Heart right ventricle (tissue), 16 donors: ENCODE measurements at regions of chr16 and their contacts with region 1.

Region 1: DNA sequence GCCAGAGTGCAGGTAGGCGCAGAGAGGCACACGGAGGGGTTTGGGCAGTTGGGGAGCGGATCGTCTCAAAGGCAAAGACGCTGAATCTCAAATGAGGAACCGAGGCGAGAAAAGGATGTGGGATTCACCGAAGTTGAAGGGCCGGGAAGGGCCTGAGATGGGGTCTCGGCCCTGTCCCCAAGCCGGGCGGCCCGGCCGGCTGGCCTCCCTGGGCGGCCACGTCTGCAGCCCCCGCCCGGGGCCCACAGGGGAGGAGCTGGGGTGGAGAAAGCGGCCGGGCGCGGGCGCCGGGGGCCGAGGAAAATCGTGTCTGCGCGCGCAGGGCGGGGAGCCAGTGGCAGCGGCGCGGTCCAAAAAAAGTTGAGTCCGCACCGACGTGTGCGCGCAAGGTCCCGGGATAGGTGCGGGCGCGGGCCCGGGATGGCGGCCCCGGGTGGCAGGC is 458 bp downstream of the SLC12A4 start:
- DNase-seq: peak; percentile 59 to 68
- ATAC-seq: peak in 6 of 8 donors; percentile 10 to 44 (median 30)
- H3K4me3 ChIP-seq: peak overlapping the region; percentile 63 to 100 (median 94)
- H3K27ac ChIP-seq: peak overlapping the region; percentile 94 to 100 (median 100)
- H3K4me1 ChIP-seq: peaks cover 38 to 58% (median 44%) of the 10 kb centered on the region in 9 donors
- H3K27me3 ChIP-seq: no peaks in the 10 kb centered on the region
- CTCF ChIP-seq: no peak

Region 2: GRCh38 chr16:67935402-67936123 is 32.4 kb before region 1 on chr16:
- intact Hi-C with region 1: loop called in 1 of 10 experiments (anchors 2 kb)
- DNase-seq: peak; percentile 92 to 94
- ATAC-seq: peak; percentile 90 to 95 (median 92)
- H3K4me3 ChIP-seq: peak overlapping the region; percentile 70 to 96 (median 86)
- H3K27ac ChIP-seq: peak overlapping the region; percentile 70 to 98 (median 95)
- H3K4me1 ChIP-seq: peaks cover 4 to 40% (median 33%) of the 10 kb centered on the region in 9 donors
- H3K27me3 ChIP-seq: no peaks in the 10 kb centered on the region
- CTCF ChIP-seq: peak in 1 of 9 donors; percentile 5

Region 3: GRCh38 chr16:67951485-67951884 is 16.5 kb before region 1 on chr16:
- intact Hi-C with region 1: no loop called
- DNase-seq: peak; percentile 77 to 83
- ATAC-seq: peak; percentile 60 to 89 (median 70)
- H3K4me3 ChIP-seq: no peak overlapping the region
- H3K27ac ChIP-seq: peak overlapping the region in 8 of 10 donors; percentile 48 to 81 (median 60)
- H3K4me1 ChIP-seq: peaks cover 11 to 46% (median 20%) of the 10 kb centered on the region in 9 donors
- H3K27me3 ChIP-seq: no peaks in the 10 kb centered on the region
- CTCF ChIP-seq: no peak